CD4-positive, alpha-beta memory T cell (primary cell): ENCODE measurements at regions of chr2 and their contacts with region 1.

Region 1: DNA sequence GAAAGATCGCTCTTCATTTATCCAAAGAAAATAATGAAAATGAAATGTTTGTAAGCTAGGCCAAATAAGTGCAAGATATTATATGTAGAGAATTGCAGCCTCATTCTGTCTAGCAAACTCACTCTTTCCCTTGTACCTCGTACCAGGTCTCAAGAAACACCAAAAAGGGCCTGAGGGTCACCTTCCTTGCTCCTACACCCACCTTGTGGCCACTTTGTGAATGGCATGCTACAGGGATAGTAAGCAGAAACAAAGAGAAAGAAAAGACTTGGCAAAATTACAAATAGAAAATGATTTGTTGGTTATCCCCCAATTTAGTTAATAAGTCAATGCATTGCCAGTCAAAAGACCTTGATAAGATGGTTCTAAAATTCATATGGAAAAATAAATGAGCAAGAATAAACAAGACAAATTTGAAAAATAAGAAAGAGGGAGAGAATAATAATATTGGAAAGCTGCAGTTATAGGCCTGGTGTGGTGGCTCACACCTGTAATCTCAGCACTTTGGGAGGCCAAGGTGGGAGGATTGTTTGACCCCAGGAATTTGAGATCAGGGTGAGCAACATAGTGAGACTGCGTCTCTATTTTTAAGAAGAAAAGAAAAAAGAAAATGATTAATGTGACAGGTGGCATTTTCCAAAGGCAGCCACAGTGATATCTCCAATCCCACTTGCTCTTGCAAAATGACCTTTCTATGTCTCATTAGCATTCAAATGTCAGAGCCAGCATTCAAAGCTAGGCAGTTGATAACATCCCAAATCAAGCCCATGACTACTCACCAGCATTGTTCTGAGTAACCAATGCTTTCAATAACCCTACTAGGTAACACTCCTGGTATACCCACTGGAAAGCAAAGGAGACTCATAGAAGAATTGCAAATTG is 38.8 kb upstream of the BMP10 start:
- DNase-seq: peak; percentile 43 to 69 (median 54)
- H3K4me3 ChIP-seq: no peak overlapping the region
- H3K4me3 Mint-ChIP-seq: peak overlapping the region in 5 of 8 donors; percentile 15 to 70 (median 55)
- H3K27ac ChIP-seq: no peak overlapping the region
- H3K27ac Mint-ChIP-seq: peak overlapping the region; percentile 70 to 92 (median 84)
- H3K4me1 ChIP-seq: peaks cover 76% of the 10 kb centered on the region
- H3K4me1 Mint-ChIP-seq: peaks cover 31 to 38% (median 36%) of the 10 kb centered on the region in 4 donors
- H3K27me3 ChIP-seq: no peaks in the 10 kb centered on the region
- H3K27me3 Mint-ChIP-seq: no peaks in the 10 kb centered on the region

Region 2: DNA sequence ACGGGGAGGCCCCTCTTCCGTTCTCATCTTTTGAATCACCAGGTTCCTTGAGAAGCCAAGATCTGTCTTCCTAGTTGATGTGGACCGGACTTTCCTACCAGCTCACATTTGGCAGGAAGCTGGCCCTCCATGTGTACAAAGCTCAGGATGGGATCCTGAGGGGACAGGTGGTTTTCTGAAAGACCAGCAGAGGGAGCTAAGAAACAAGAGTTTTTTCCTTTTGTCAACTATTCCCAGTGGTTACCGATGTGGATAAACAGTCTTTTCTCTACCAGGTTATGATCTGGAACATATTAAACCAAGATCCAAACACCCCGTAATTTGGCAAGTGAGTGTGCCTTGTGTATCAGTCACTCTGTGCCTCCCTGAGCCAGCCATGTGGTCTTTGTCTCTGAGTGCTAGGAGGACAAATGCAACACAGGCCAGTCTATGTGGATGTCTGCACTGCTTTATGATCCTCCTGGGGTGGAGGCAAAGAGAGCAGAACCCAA is 200.6 kb before region 1 on chr2:
- CTCF ChIA-PET with region 1: interaction called, 73 read pairs
- POLR2A ChIA-PET with region 1: interaction called, 17 read pairs
- intact Hi-C with region 1: loop called (anchors 1 kb)
- DNase-seq: peak in 3 of 5 donors; percentile 29 to 47 (median 40)
- H3K4me3 ChIP-seq: no peak overlapping the region
- H3K4me3 Mint-ChIP-seq: peak overlapping the region in 3 of 8 donors; percentile 27 to 67 (median 30)
- H3K27ac ChIP-seq: peak overlapping the region; percentile 24
- H3K27ac Mint-ChIP-seq: peak overlapping the region; percentile 60 to 82 (median 68)
- H3K4me1 ChIP-seq: peaks cover 10% of the 10 kb centered on the region
- H3K4me1 Mint-ChIP-seq: peaks cover 13 to 37% (median 20%) of the 10 kb centered on the region in 4 donors
- H3K27me3 ChIP-seq: no peaks in the 10 kb centered on the region
- H3K27me3 Mint-ChIP-seq: no peaks in the 10 kb centered on the region

Region 3: DNA sequence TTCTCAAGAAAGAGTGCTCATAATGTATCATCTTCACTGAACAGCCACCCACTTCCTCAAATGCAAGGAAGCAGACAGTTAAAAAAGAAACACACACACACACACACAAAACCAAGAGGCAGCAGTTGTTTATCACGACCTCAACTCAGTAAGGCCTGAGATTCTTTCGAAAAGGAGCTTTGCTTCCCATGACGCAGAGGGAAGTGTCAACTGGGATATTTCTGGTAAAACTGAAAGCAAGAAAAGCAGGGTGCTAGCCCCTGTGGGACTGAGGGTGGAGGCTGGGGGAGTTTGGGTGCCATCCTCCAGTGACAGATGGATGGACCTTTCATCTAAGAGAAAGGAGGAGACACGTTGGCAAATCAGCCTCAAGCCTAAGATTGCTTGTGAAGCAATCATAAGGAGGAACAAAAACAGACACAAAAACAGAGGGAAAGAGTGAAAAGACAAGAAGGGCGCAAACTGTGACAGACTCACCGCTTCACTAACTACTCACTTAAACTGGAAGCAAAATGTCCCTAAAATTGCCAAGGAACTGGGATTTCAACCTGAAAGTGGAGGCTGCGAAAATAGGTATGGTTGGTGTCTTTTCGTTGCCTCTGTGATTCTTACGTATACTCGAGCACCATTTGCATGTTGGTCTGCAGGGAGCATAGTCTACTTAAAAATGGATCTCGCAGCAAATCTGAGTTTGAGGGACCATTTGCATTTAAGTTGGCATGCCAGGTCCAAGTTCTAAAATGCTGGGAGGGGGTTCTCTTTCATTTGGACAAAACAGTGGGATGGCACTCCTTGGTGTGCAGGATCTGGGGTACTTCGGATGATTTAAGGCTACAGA is 175.1 kb before region 1 on chr2 and contains the start of gene ARHGAP25:
- CTCF ChIA-PET with region 1: interaction called, 14 read pairs
- POLR2A ChIA-PET with region 1: interaction called, 25 read pairs
- intact Hi-C with region 1: no loop called
- DNase-seq: peak; percentile 58 to 79 (median 61)
- H3K4me3 ChIP-seq: peak within 1 kb of the TSS; percentile 83 to 99
- H3K4me3 Mint-ChIP-seq: no peak within 1 kb of the TSS
- H3K27ac ChIP-seq: peak within 1 kb of the TSS; percentile 81
- H3K27ac Mint-ChIP-seq: no peak within 1 kb of the TSS
- H3K4me1 ChIP-seq: peaks cover 54% of the 10 kb centered on the region
- H3K4me1 Mint-ChIP-seq: peaks cover 23 to 44% (median 34%) of the 10 kb centered on the region in 4 donors
- H3K27me3 ChIP-seq: no peaks in the 10 kb centered on the region
- H3K27me3 Mint-ChIP-seq: no peaks in the 10 kb centered on the region
- total RNA-seq, gene ARHGAP25: 162 to 163 TPM

Region 4: DNA sequence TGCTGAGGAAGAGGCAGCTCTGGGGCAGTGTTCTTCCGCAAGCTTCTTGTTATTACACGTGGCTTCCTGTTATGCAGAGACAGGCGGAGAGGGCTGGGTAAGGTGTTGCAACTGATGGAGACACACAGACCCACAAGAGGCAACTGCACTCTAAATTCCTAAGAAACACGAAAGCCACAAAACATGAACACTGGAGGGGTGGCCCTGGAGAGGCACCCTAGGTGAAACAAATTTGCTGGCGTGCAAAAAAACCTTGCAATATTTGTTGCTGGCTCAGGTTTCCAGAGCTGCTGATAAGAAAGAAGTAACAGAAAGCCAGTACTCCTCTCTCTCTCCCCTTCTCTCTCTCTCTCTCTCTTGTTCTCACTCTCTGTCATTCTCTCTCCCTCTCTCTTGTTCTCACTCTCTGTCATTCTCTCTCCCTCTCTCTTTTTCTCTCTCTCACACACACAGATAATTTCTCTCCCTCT is 143.6 kb before region 1 on chr2:
- CTCF ChIA-PET with region 1: interaction called, 7 read pairs
- POLR2A ChIA-PET with region 1: interaction called, 10 read pairs
- intact Hi-C with region 1: loop called (anchors 5 kb)
- DNase-seq: peak; percentile 79 to 89 (median 81)
- H3K4me3 ChIP-seq: peak overlapping the region; percentile 12 to 47
- H3K4me3 Mint-ChIP-seq: peak overlapping the region; percentile 78 to 95 (median 86)
- H3K27ac ChIP-seq: peak overlapping the region; percentile 90
- H3K27ac Mint-ChIP-seq: peak overlapping the region; percentile 95 to 99 (median 98)
- H3K4me1 ChIP-seq: peaks cover 99% of the 10 kb centered on the region
- H3K4me1 Mint-ChIP-seq: peaks cover 85 to 99% (median 92%) of the 10 kb centered on the region in 4 donors
- H3K27me3 ChIP-seq: no peaks in the 10 kb centered on the region
- H3K27me3 Mint-ChIP-seq: peaks cover 0 to 2% of the 10 kb centered on the region in 2 donors

Region 5: DNA sequence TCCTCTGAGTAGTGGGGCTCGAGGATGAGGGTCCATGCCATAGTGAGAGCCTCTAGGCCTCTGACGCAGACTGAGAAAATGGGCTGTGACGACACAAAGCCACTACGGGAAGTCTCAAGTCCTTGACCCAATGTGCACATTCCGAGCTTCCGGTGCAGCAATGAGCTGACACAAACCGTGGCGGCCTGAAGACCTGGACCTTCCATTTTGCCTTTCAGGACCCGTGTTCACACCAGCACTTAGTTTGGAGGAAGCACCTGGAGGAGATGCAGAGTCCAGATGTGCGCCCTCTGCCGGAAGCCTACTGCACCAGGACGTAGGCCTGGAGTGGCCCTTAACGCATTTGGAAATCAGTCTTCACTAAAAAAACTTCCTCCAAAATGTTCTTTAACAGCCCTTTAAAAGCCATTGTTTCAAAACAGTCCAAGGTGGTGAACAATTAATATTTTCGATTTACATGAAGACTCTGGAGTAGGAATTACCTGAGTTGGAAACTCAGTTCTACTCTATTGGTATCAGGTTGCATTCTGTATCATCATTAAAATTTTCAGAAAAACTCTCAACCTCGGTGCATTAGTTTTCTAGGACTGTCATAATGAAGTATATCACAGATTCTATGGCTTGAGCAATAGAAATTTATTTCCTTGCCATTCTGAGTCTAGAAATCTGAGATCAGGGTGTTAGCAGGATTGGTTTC is 72.7 kb before region 1 on chr2:
- CTCF ChIA-PET with region 1: interaction called, 43 read pairs
- POLR2A ChIA-PET with region 1: interaction called, 21 read pairs
- intact Hi-C with region 1: loop called (anchors 1 kb)
- DNase-seq: peak; percentile 50 to 62 (median 54)
- H3K4me3 ChIP-seq: no peak overlapping the region
- H3K4me3 Mint-ChIP-seq: peak overlapping the region in 2 of 8 donors; percentile 24 to 38
- H3K27ac ChIP-seq: no peak overlapping the region
- H3K27ac Mint-ChIP-seq: peak overlapping the region in 3 of 7 donors; percentile 47 to 66 (median 60)
- H3K4me1 ChIP-seq: peaks cover 26% of the 10 kb centered on the region
- H3K4me1 Mint-ChIP-seq: peaks cover 19 to 44% (median 31%) of the 10 kb centered on the region in 4 donors
- H3K27me3 ChIP-seq: no peaks in the 10 kb centered on the region
- H3K27me3 Mint-ChIP-seq: no peaks in the 10 kb centered on the region

Region 6: DNA sequence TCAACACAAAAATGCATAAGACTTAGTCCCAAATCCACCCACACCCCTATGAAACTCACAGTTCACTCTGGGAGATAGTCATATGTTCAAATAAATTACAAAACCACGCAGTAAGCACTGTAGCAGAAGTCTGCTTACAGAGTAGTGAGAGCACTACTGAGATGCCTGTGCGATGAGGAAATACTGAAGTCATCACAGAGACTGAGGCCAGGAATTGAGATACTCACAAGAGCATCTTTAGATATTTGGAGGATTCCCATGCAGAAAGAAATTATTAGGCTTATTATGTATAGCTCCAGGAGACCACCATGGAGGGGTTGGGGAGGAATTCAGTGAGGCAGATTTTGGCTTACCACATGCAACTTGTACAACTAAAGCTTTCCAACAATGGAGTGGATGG is 185.3 kb after region 1 on chr2:
- CTCF ChIA-PET with region 1: no interaction called
- POLR2A ChIA-PET with region 1: no interaction called
- intact Hi-C with region 1: no loop called
- DNase-seq: no peak
- H3K4me3 ChIP-seq: no peak overlapping the region
- H3K4me3 Mint-ChIP-seq: no peak overlapping the region
- H3K27ac ChIP-seq: no peak overlapping the region
- H3K27ac Mint-ChIP-seq: peak overlapping the region in 1 of 7 donors; percentile 14
- H3K4me1 ChIP-seq: no peaks in the 10 kb centered on the region
- H3K4me1 Mint-ChIP-seq: no peaks in the 10 kb centered on the region
- H3K27me3 ChIP-seq: no peaks in the 10 kb centered on the region
- H3K27me3 Mint-ChIP-seq: peaks cover 13 to 17% of the 10 kb centered on the region in 2 donors